CD8-positive, alpha-beta T cell (primary cell): ENCODE measurements at regions of chr4 and their contacts with region 1.

Region 1: GRCh38 chr4:108172753-108173598 is 4.2 kb upstream of the LEF1 start:
- DNase-seq: peak; percentile 39 to 85 (median 72)
- ATAC-seq: peak; percentile 46
- H3K4me3 ChIP-seq: peak overlapping the region; percentile 71 to 82
- H3K4me3 Mint-ChIP-seq: peak overlapping the region; percentile 92
- H3K27ac ChIP-seq: peak overlapping the region; percentile 48 to 71
- H3K27ac Mint-ChIP-seq: peak overlapping the region; percentile 93
- H3K4me1 ChIP-seq: peaks cover 39% of the 10 kb centered on the region
- H3K4me1 Mint-ChIP-seq: peaks cover 58% of the 10 kb centered on the region
- H3K27me3 ChIP-seq: peaks cover 0 to 26% of the 10 kb centered on the region in 2 experiments
- H3K27me3 Mint-ChIP-seq: peaks cover 3% of the 10 kb centered on the region
- CTCF ChIP-seq: no peak

Region 2: GRCh38 chr4:108018040-108018883 is 154.7 kb before region 1 on chr4:
- CTCF ChIA-PET with region 1: interaction called, 12 read pairs
- POLR2A ChIA-PET with region 1: interaction called, 4 read pairs
- intact Hi-C with region 1: no loop called
- DNase-seq: peak; percentile 61 to 90 (median 81)
- ATAC-seq: peak; percentile 88
- H3K4me3 ChIP-seq: no peak overlapping the region
- H3K4me3 Mint-ChIP-seq: no peak overlapping the region
- H3K27ac ChIP-seq: no peak overlapping the region
- H3K27ac Mint-ChIP-seq: no peak overlapping the region
- H3K4me1 ChIP-seq: peaks cover 4% of the 10 kb centered on the region
- H3K4me1 Mint-ChIP-seq: peaks cover 15% of the 10 kb centered on the region
- H3K27me3 ChIP-seq: no peaks in the 10 kb centered on the region
- H3K27me3 Mint-ChIP-seq: no peaks in the 10 kb centered on the region
- CTCF ChIP-seq: peak; percentile 82

Region 3: GRCh38 chr4:108072300-108072699 is 100.7 kb before region 1 on chr4:
- CTCF ChIA-PET with region 1: no interaction called
- POLR2A ChIA-PET with region 1: interaction called, 5 read pairs
- intact Hi-C with region 1: loop called in 1 of 2 experiments (anchors 2 kb)
- DNase-seq: peak; percentile 37 to 93 (median 77)
- ATAC-seq: peak; percentile 87
- H3K4me3 ChIP-seq: peak overlapping the region in 1 of 2 experiments; percentile 20
- H3K4me3 Mint-ChIP-seq: peak overlapping the region; percentile 60
- H3K27ac ChIP-seq: peak overlapping the region; percentile 67 to 76
- H3K27ac Mint-ChIP-seq: peak overlapping the region; percentile 97
- H3K4me1 ChIP-seq: peaks cover 58% of the 10 kb centered on the region
- H3K4me1 Mint-ChIP-seq: peaks cover 74% of the 10 kb centered on the region
- H3K27me3 ChIP-seq: no peaks in the 10 kb centered on the region
- H3K27me3 Mint-ChIP-seq: no peaks in the 10 kb centered on the region
- CTCF ChIP-seq: no peak

Region 4: GRCh38 chr4:108160741-108161352 is 12.1 kb before region 1 on chr4:
- CTCF ChIA-PET with region 1: interaction called, 5 read pairs
- POLR2A ChIA-PET with region 1: interaction called, 12 read pairs
- intact Hi-C with region 1: loop called in 1 of 2 experiments (anchors 1 kb)
- DNase-seq: peak in 2 of 9 experiments; percentile 40 to 65
- ATAC-seq: peak; percentile 40
- H3K4me3 ChIP-seq: peak overlapping the region; percentile 73 to 78
- H3K4me3 Mint-ChIP-seq: peak overlapping the region; percentile 83
- H3K27ac ChIP-seq: peak overlapping the region in 1 of 2 experiments; percentile 28
- H3K27ac Mint-ChIP-seq: peak overlapping the region; percentile 91
- H3K4me1 ChIP-seq: peaks cover 37% of the 10 kb centered on the region
- H3K4me1 Mint-ChIP-seq: peaks cover 71% of the 10 kb centered on the region
- H3K27me3 ChIP-seq: peaks cover 0 to 8% of the 10 kb centered on the region in 2 experiments
- H3K27me3 Mint-ChIP-seq: no peaks in the 10 kb centered on the region
- CTCF ChIP-seq: no peak

Region 5: DNA sequence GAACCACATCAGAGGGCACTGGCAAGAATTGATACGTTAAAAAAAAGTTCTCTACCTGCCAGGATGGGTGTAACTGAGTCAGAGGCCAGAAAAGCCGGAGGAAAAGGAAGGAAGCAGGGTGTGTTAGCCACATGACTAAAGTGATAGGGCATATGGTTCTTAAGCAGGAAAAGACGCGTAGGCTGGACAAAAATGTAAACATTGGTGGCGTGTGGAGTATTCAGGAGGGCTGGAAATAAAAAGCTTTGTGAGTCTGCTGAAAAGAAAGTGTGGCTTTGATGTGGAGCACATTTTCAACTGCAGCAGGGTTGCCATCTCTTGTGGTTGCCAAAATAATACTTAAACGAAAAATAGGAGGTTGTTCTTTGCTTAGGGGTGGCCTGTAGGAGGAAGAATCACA is 260.9 kb after region 1 on chr4:
- CTCF ChIA-PET with region 1: interaction called, 3 read pairs
- POLR2A ChIA-PET with region 1: no interaction called
- intact Hi-C with region 1: loop called in 1 of 2 experiments (anchors 5 kb)
- DNase-seq: peak in 8 of 9 experiments; percentile 13 to 75 (median 46)
- ATAC-seq: peak; percentile 78
- H3K4me3 ChIP-seq: peak overlapping the region in 1 of 2 experiments; percentile 23
- H3K4me3 Mint-ChIP-seq: peak overlapping the region; percentile 52
- H3K27ac ChIP-seq: peak overlapping the region; percentile 21 to 47
- H3K27ac Mint-ChIP-seq: peak overlapping the region; percentile 89
- H3K4me1 ChIP-seq: peaks cover 32% of the 10 kb centered on the region
- H3K4me1 Mint-ChIP-seq: peaks cover 53% of the 10 kb centered on the region
- H3K27me3 ChIP-seq: no peaks in the 10 kb centered on the region
- H3K27me3 Mint-ChIP-seq: no peaks in the 10 kb centered on the region
- CTCF ChIP-seq: no peak

Region 6: GRCh38 chr4:108620101-108620932 is 447.3 kb after region 1 on chr4 and contains the start of gene RPL34:
- CTCF ChIA-PET with region 1: no interaction called
- POLR2A ChIA-PET with region 1: no interaction called
- intact Hi-C with region 1: loop called (anchors 5 kb)
- DNase-seq: peak; percentile 94 to 100 (median 97)
- ATAC-seq: peak; percentile 98
- H3K4me3 ChIP-seq: peak within 1 kb of the TSS; percentile 92 to 97
- H3K4me3 Mint-ChIP-seq: peak within 1 kb of the TSS; percentile 93
- H3K27ac ChIP-seq: peak within 1 kb of the TSS; percentile 85 to 90
- H3K27ac Mint-ChIP-seq: peak within 1 kb of the TSS; percentile 96
- H3K4me1 ChIP-seq: peaks cover 50% of the 10 kb centered on the region
- H3K4me1 Mint-ChIP-seq: peaks cover 58% of the 10 kb centered on the region
- H3K27me3 ChIP-seq: no peaks in the 10 kb centered on the region
- H3K27me3 Mint-ChIP-seq: no peaks in the 10 kb centered on the region
- CTCF ChIP-seq: no peak
- total RNA-seq, gene RPL34: 3,253 to 3,442 TPM